ENCODE measurements at regions of chr2 and their contacts with region 1.

Region 1: DNA sequence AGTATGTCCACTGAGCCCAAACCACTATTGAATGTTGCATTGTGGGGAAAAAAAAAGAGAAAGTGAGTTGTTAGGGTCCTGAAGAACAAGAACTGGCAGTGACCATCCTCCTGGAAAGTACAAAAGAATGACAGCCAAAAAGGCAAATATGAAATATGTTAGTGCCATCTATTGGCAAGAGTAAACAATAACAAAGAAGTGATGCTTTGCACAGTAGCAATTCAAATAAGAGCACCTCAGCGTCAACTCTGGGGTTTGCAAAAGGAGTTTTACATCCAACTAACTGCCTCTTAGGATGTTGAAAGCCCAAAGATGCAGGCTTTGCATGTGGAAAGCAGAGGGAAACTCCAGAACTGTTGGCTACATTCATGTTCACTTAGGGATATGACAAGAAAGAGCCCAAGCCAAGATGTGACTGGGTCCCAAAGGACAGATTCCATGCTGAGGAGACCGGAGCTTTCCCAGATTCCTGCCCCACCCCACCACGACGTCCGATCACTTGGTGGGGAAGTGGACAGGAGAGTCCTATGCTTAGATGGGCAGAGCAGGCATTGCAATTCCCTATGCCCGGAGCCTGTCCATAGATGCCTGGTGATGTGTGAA is 15.6 kb downstream of the TRABD2A start:
- DNase-seq: no peak
- ATAC-seq: peak; percentile 50
- H3K4me3 Mint-ChIP-seq: no peak overlapping the region
- H3K27ac Mint-ChIP-seq: peak overlapping the region; percentile 84
- H3K4me1 Mint-ChIP-seq: peaks cover 80% of the 10 kb centered on the region
- H3K27me3 Mint-ChIP-seq: no peaks in the 10 kb centered on the region
- CTCF ChIP-seq: peak; percentile 56

Region 2: GRCh38 chr2:84495539-84496146 is 369.6 kb before region 1 on chr2:
- CTCF ChIA-PET with region 1: no interaction called
- POLR2A ChIA-PET with region 1: no interaction called
- intact Hi-C with region 1: loop called (anchors 5 kb)
- DNase-seq: peak; percentile 37
- ATAC-seq: peak; percentile 99
- H3K4me3 Mint-ChIP-seq: no peak overlapping the region
- H3K27ac Mint-ChIP-seq: no peak overlapping the region
- H3K4me1 Mint-ChIP-seq: peaks cover 15% of the 10 kb centered on the region
- H3K27me3 Mint-ChIP-seq: no peaks in the 10 kb centered on the region
- CTCF ChIP-seq: peak; percentile 74

Region 3: GRCh38 chr2:84741296-84741765 is 124.0 kb before region 1 on chr2:
- CTCF ChIA-PET with region 1: interaction called, 10 read pairs
- POLR2A ChIA-PET with region 1: no interaction called
- intact Hi-C with region 1: no loop called
- DNase-seq: peak; percentile 75
- ATAC-seq: peak; percentile 100
- H3K4me3 Mint-ChIP-seq: no peak overlapping the region
- H3K27ac Mint-ChIP-seq: peak overlapping the region; percentile 32
- H3K4me1 Mint-ChIP-seq: peaks cover 15% of the 10 kb centered on the region
- H3K27me3 Mint-ChIP-seq: no peaks in the 10 kb centered on the region
- CTCF ChIP-seq: peak; percentile 52

Region 4: DNA sequence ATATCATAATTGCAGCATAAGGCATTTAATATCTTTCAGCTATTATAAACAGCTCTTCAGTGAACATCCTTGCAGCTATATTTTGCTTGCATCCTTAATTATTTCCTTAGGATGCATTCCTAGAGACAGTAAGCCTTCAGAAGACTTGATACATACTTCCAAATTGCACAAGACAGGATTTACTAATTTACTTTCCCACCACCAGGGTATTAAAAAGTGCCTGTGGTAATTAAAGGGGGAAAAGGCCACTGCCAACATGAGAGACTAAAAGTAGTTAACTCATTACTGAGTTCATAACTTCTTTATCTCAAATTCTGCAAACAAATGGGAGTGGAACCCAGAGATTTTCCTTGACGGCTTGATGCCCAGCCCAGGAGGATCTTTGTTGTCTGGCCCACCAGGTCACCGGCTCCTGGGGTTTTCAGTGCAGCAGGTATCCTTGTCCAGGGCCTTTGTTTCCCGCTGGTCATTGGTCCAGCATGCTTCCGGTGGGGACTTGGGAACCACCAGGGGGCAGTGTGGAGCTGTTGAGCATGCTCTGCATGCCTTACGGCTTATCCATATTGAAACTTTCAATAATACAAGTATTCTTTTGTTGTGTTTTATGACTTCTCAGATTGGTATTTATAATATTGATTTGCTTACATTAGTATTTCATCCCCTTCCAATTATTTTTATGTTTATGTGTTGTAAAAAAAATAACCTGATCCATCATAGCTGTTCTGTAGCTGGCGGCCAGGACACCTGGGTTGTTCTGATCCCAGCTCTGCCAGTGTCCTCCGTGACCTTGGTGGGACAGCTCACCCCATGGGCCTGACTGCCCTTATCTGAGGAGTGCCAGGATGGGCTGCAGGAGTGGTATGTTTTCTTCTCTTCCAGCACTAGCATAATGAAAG is 401.1 kb after region 1 on chr2:
- CTCF ChIA-PET with region 1: no interaction called
- POLR2A ChIA-PET with region 1: no interaction called
- intact Hi-C with region 1: no loop called
- DNase-seq: peak; percentile 86
- ATAC-seq: peak; percentile 87
- H3K4me3 Mint-ChIP-seq: no peak overlapping the region
- H3K27ac Mint-ChIP-seq: no peak overlapping the region
- H3K4me1 Mint-ChIP-seq: no peaks in the 10 kb centered on the region
- H3K27me3 Mint-ChIP-seq: no peaks in the 10 kb centered on the region
- CTCF ChIP-seq: peak; percentile 96